ENCODE measurements at regions of chr4 and their contacts with region 1.

Region 1: GRCh38 chr4:74874753-74875367 is 58.1 kb upstream of the PARM1 start:
- DNase-seq: peak; percentile 61
- H3K4me3 ChIP-seq: no peak overlapping the region
- H3K27ac ChIP-seq: no peak overlapping the region
- H3K4me1 ChIP-seq: no peaks in the 10 kb centered on the region
- H3K27me3 ChIP-seq: no peaks in the 10 kb centered on the region
- CTCF ChIP-seq: peak; percentile 61 to 88 (median 84)
- POLR2A ChIP-seq: no peak

Region 2: DNA sequence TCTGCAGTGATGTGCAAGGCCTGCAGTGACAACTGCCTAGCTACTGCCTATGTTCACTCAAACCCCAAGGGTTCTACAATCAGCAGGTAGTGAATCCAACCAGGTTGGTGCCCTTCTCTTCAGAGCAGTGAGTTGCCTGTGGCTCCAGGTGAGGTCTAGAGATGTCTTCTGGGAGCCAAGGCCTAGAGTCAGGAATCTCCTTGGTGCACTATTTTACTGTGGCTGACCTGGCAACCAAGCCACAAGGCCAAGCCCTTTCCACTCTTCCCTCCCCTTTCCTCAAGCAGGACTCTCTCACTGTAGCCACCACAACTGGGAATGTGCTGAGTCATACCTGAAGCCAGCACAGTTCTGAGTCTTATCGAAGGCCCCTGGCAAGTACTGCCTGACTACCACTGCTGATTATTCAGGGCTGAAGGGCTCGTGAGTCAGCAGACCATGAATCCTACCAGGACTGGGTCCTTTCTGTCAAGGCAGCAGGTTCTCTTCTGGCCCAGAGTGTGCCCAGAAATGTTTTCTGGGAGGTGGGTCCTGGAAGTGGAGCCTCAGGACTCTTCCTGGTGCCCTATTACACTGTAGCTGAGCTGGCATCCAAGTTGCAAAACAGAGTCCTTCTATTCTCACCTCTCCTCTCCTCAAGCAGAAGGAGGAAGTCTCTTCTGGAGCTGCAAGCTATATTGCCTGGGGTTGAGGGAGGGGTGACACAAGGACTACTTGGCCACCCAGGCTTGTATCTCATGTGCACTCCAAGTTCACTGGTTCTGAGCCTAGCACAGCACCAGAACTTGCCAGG is 192.1 kb before region 1 on chr4:
- intact Hi-C with region 1: no loop called
- DNase-seq: no peak
- H3K4me3 ChIP-seq: no peak overlapping the region
- H3K27ac ChIP-seq: no peak overlapping the region
- H3K4me1 ChIP-seq: no peaks in the 10 kb centered on the region
- H3K27me3 ChIP-seq: no peaks in the 10 kb centered on the region
- CTCF ChIP-seq: no peak
- POLR2A ChIP-seq: no peak

Region 3: GRCh38 chr4:74969507-74970474 is 94.9 kb after region 1 on chr4:
- intact Hi-C with region 1: no loop called
- DNase-seq: no peak
- H3K4me3 ChIP-seq: no peak overlapping the region
- H3K27ac ChIP-seq: peak overlapping the region in 1 of 2 donors; percentile 39
- H3K4me1 ChIP-seq: peaks cover 3% of the 10 kb centered on the region
- H3K27me3 ChIP-seq: no peaks in the 10 kb centered on the region
- CTCF ChIP-seq: peak in 2 of 4 experiments; percentile 27 to 35
- POLR2A ChIP-seq: no peak

Region 4: DNA sequence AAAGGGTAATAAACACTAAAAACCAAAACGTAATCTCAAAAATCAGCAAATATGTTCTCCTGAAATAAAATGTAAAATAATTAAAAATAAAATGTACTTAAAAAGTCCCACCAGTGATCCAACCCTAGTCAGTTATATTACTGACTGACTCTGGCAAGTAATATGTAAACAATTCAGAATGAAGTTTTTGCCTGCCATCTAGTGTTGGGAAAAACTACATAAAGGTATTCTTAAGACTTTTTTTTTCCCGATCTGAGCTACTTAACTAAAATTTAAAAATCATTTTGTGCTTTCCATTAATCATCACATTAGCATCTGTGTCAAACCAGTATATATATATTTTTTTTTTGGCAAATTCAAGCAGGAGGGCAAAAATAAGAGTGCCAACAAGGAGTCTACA is 615.3 kb after region 1 on chr4:
- intact Hi-C with region 1: loop called (anchors 10 kb)
- DNase-seq: no peak
- H3K4me3 ChIP-seq: no peak overlapping the region
- H3K27ac ChIP-seq: no peak overlapping the region
- H3K4me1 ChIP-seq: no peaks in the 10 kb centered on the region
- H3K27me3 ChIP-seq: no peaks in the 10 kb centered on the region
- CTCF ChIP-seq: peak in 3 of 4 experiments; percentile 33 to 58 (median 37)
- POLR2A ChIP-seq: no peak